A549 (cell line): ENCODE measurements at regions of chr19 and their contacts with region 1.

Region 1: GRCh38 chr19:47391510-47392223 is 27.7 kb downstream of the MEIS3 start:
- DNase-seq: peak; percentile 75 to 81
- ATAC-seq: peak; percentile 91 to 93
- H3K4me3 ChIP-seq: no peak overlapping the region
- H3K27ac ChIP-seq: peak overlapping the region in 1 of 2 experiments; percentile 42; a peak in 1 of 6 replicates
- H3K4me1 ChIP-seq: no peaks in the 10 kb centered on the region
- CTCF ChIP-seq: peak; percentile 98
- EP300 ChIP-seq: no peak
- POLR2A ChIP-seq: no peak
- RAD21 ChIP-seq: peak; percentile 89 to 91

Region 2: GRCh38 chr19:47273313-47273977 is 118.2 kb before region 1 on chr19:
- CTCF ChIA-PET with region 1: interaction called, 13 read pairs
- POLR2A ChIA-PET with region 1: no interaction called
- DNase-seq: peak; percentile 96
- ATAC-seq: peak; percentile 66 to 89
- H3K4me3 ChIP-seq: peak overlapping the region; percentile 59
- H3K27ac ChIP-seq: peak overlapping the region; percentile 80 to 90
- H3K4me1 ChIP-seq: peaks cover 15% of the 10 kb centered on the region
- CTCF ChIP-seq: no peak
- EP300 ChIP-seq: no peak
- POLR2A ChIP-seq: peak; percentile 41
- RAD21 ChIP-seq: no peak

Region 3: GRCh38 chr19:47305309-47305751 is 86.3 kb before region 1 on chr19:
- CTCF ChIA-PET with region 1: interaction called, 198 read pairs
- POLR2A ChIA-PET with region 1: no interaction called
- DNase-seq: peak; percentile 86 to 92
- ATAC-seq: peak; percentile 74 to 75
- H3K4me3 ChIP-seq: no peak overlapping the region
- H3K27ac ChIP-seq: peak overlapping the region; percentile 60 to 71
- H3K4me1 ChIP-seq: peaks cover 29% of the 10 kb centered on the region
- CTCF ChIP-seq: peak; percentile 99
- EP300 ChIP-seq: no peak
- POLR2A ChIP-seq: no peak
- RAD21 ChIP-seq: peak; percentile 58 to 62

Region 4: GRCh38 chr19:47343194-47343802 is 48.4 kb before region 1 on chr19:
- CTCF ChIA-PET with region 1: interaction called, 20 read pairs
- POLR2A ChIA-PET with region 1: no interaction called
- DNase-seq: no peak
- ATAC-seq: no peak
- H3K4me3 ChIP-seq: no peak overlapping the region
- H3K27ac ChIP-seq: no peak overlapping the region
- H3K4me1 ChIP-seq: no peaks in the 10 kb centered on the region
- CTCF ChIP-seq: no peak
- EP300 ChIP-seq: no peak
- POLR2A ChIP-seq: no peak
- RAD21 ChIP-seq: no peak

Region 5: DNA sequence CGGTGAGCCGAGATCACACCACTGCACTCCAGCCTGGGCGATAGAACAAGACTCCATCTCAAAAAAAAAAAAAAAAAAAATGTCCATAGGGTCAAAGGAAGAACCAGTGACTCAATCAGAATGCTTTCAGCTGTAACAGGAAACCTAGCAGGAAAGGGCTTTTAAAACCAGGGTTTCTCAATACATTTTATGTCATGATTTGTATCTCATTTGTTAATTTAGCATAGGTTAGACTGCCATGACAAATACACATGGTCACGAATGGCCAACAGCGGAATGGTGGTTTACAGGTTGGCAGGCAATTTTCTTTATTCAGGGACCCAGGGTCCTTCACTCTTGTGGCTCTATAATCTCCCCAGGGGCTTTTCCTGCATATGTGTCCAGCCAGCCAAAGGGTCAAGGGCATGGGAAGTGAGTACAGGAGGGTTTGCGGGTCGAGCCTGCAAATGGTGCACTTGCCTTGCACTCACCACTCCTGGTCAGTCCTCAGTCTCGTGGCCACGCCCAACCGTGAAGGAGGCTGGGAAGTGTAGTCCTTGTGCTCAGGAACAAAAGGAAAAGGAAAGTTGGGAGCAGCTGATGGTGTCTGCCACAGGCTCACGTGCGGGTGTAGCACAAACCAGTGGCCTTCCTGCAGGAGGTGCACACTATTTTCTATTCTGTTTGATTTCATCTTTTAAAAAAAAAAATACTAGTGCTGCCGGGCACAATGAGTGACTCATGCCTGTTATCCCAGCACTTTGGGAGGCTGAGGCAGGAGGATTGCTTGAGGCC is 27.7 kb before region 1 on chr19:
- CTCF ChIA-PET with region 1: interaction called, 43 read pairs
- POLR2A ChIA-PET with region 1: no interaction called
- DNase-seq: peak in 1 of 2 experiments; percentile 60
- ATAC-seq: peak; percentile 75 to 77
- H3K4me3 ChIP-seq: no peak overlapping the region
- H3K27ac ChIP-seq: no peak overlapping the region
- H3K4me1 ChIP-seq: no peaks in the 10 kb centered on the region
- CTCF ChIP-seq: no peak
- EP300 ChIP-seq: no peak
- POLR2A ChIP-seq: no peak
- RAD21 ChIP-seq: no peak

Region 6: DNA sequence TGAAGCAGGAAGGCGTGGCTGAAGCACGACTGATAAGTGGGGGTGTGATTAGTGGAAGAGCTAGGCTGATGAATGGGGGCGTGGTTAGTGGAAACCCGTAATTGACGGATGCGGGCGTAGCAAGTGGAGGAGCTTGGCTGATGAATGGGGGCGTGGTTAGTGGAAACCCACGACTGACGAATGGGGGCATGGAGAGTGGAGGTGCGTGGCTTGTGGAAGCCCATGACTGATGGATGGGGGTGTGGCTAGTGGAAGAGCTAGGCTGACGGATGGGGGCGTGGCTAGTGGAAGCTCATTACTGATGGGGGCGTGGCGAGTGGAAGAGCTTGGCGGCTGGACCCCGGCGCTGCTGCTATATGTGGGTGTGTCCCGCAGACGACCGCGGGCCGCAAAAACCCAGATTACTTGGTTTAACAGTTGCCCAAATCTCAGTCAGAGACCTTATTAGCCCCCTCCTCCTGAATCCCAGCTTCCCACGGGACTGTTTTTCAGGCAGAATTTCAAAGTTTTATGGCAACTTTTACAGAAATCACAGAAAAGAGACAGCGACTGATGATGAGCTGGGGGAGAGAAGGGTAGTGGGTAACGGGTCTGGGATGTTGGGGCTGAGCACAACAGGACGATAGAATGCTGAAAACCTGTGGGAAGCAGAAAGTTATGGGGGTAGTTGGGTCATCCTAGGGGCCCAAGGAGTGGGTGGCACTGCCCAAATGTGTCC is 36.7 kb after region 1 on chr19:
- CTCF ChIA-PET with region 1: interaction called, 18 read pairs
- POLR2A ChIA-PET with region 1: no interaction called
- DNase-seq: peak; percentile 95 to 98
- ATAC-seq: peak; percentile 75 to 85
- H3K4me3 ChIP-seq: peak overlapping the region; percentile 42
- H3K27ac ChIP-seq: peak overlapping the region in 1 of 2 experiments; percentile 43; a peak in 2 of 6 replicates
- H3K4me1 ChIP-seq: peaks cover 20% of the 10 kb centered on the region
- CTCF ChIP-seq: no peak
- EP300 ChIP-seq: no peak
- POLR2A ChIP-seq: no peak
- RAD21 ChIP-seq: no peak

Region 7: DNA sequence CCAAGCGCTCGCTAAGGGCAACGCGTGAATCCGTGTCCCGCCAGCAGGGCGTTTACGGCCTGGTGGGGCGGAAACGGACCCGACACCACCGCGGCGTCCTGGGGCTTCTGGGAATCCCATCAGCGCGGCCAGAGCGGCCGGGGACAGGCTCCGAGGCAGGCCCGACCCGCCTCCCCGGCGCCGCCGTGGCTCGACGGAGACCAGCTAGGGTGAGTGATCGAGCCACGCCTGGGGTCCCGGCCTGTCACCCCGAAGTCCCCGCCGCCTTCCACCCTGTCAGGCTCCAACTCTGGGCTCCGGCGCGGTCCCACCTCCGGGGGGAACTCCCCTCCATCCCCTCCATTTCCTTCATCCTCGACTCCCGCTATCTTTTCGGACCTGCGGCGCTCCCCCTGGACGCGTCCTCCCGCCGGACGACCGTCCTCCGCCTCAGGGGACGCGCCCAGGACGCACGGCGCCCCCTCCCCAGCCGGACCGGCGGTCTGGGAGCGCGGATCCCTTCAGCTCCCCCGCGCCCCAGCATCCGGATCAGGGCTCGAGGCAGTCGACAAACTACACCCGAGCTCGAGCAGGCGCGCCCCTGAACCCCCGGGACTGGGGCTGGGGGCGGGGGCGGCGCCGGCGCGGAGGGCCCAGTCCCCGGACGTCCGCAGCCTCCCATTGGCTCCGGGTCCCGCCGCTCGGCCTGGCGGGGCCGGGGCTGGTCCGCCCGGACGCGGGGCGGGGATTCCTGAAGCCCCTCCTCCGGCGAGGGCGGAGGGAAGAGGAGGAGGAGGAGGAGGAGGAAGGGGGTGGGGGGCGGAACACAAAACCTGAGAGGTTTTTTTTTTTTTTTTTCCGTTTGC is 216.6 kb after region 1 on chr19:
- CTCF ChIA-PET with region 1: no interaction called
- POLR2A ChIA-PET with region 1: no interaction called
- DNase-seq: peak; percentile 94
- ATAC-seq: peak; percentile 85 to 93
- H3K4me3 ChIP-seq: peak overlapping the region; percentile 92
- H3K27ac ChIP-seq: peak overlapping the region; percentile 93 to 96
- H3K4me1 ChIP-seq: peaks cover 21% of the 10 kb centered on the region
- CTCF ChIP-seq: no peak
- EP300 ChIP-seq: no peak
- POLR2A ChIP-seq: peak; percentile 73
- RAD21 ChIP-seq: no peak